Activated CD8-positive, alpha-beta T cell treated with anti-CD3 and anti-CD28 coated beads for 36 hours (primary cell): ENCODE measurements at regions of chr16 and their contacts with region 1.

Region 1: GRCh38 chr16:5615868-5616642 is 518.5 kb upstream of the EEF2KMT start:
- DNase-seq: peak; percentile 54
- ATAC-seq: peak; percentile 20
- H3K4me3 Mint-ChIP-seq: no peak overlapping the region
- H3K27ac Mint-ChIP-seq: no peak overlapping the region
- H3K4me1 Mint-ChIP-seq: no peaks in the 10 kb centered on the region
- H3K27me3 Mint-ChIP-seq: peaks cover 20% of the 10 kb centered on the region
- CTCF ChIP-seq: peak; percentile 77

Region 2: DNA sequence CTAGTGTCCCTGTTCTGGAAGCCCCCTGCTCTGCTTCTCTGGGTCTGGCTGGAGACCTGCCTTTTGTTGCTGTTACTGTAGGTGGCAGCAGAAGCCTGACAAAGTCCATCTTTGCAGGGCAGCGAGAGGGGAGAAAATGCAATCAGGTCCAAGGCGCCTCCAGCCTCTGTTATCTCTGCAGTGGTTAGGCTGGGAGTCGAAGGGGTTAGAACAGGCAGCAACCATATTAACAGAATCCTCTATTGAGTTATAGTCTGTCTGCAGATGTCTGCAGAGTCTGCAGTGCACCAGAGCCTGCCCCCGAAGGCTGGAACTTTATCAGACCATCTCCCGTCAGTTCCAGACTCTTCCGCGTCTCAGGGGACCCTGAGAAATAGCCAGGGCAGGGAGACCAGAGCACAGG is 113.6 kb before region 1 on chr16:
- CTCF ChIA-PET with region 1: interaction called, 4 read pairs
- POLR2A ChIA-PET with region 1: no interaction called
- intact Hi-C with region 1: loop called (anchors 10 kb)
- DNase-seq: peak; percentile 10
- ATAC-seq: no peak
- H3K4me3 Mint-ChIP-seq: no peak overlapping the region
- H3K27ac Mint-ChIP-seq: no peak overlapping the region
- H3K4me1 Mint-ChIP-seq: no peaks in the 10 kb centered on the region
- H3K27me3 Mint-ChIP-seq: no peaks in the 10 kb centered on the region
- CTCF ChIP-seq: peak; percentile 42

Region 3: DNA sequence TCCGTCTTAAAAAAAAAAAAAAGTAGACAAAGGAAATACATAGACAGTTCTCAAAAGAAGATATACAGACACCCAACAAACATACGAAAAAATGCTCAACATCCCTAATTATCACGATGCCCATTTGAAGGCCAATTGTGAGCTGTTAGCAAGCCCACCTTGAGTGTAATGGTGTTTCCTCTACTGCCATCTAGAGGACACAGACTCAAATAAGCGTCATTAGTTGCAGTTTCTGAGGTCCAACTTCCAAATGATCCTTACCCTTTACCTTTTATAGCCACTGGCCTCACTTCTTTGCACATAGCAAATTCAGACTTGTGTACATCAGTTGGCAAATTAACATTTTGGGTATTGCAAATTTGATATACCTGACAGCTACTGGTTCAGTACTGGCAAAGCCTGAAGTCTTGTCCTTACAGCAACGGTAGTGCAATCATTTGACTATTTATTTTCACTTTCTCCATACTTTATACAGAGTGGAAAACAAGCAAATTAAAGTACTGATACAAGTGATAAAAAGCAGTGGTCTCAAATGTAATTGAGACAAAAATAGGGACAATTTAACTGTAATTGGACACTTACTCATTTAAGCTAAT is 17.9 kb after region 1 on chr16:
- CTCF ChIA-PET with region 1: interaction called, 24 read pairs
- POLR2A ChIA-PET with region 1: no interaction called
- intact Hi-C with region 1: no loop called
- DNase-seq: no peak
- ATAC-seq: no peak
- H3K4me3 Mint-ChIP-seq: no peak overlapping the region
- H3K27ac Mint-ChIP-seq: no peak overlapping the region
- H3K4me1 Mint-ChIP-seq: no peaks in the 10 kb centered on the region
- H3K27me3 Mint-ChIP-seq: no peaks in the 10 kb centered on the region
- CTCF ChIP-seq: peak; percentile 50